CD8-positive, alpha-beta T cell (primary cell): ENCODE measurements at regions of chr17 and their contacts with region 1.

Region 1: GRCh38 chr17:55264645-55265298 is at the start of gene HLF:
- DNase-seq: peak; percentile 44 to 89 (median 68)
- ATAC-seq: peak; percentile 93
- H3K4me3 ChIP-seq: peak within 1 kb of the TSS; percentile 26 to 35
- H3K4me3 Mint-ChIP-seq: peak within 1 kb of the TSS; percentile 78
- H3K27ac ChIP-seq: no peak within 1 kb of the TSS
- H3K27ac Mint-ChIP-seq: no peak within 1 kb of the TSS
- H3K4me1 ChIP-seq: peaks cover 21% of the 10 kb centered on the region
- H3K4me1 Mint-ChIP-seq: peaks cover 24% of the 10 kb centered on the region
- H3K27me3 ChIP-seq: peaks cover 12 to 16% of the 10 kb centered on the region in 2 experiments
- H3K27me3 Mint-ChIP-seq: peaks cover 57% of the 10 kb centered on the region
- CTCF ChIP-seq: no peak
- total RNA-seq, gene HLF: 0.42 to 0.62 TPM

Region 2: DNA sequence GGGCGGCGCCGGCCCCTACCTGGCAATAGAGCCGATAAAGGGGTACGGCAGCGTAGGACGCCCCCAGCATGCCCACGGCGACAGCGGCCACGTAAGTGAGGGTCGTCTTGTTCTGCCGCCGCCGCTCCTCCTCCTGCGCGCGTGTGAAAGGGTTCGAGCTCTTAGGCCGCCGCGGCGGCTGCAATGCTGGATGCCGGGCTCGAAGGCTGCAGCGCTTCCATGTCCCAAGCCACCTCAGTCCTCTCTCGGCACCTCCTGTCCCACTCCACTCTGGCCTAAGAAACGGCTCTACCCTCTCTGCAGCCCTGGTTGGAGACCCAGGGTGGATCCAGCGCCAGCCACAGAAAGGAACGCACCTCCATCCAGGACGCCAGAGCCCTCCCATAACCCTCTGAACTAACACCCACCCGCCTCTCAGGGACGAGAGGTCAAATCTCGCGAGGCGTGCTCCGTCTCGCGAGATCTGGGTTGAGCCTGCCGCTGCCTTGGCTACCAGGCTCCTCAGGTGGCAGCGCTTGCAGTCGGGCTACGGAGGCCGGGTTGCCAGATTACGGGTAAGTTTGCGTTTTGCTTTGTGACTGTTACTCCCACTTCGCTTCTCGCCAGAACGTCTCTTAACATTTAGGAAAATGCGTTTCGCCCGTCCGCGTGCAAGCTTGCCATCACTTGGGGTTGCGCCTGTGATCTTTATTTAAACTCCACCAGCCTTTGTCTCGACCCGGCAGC is 296.3 kb before region 1 on chr17 and contains the starts of genes COX11 and STXBP4:
- CTCF ChIA-PET with region 1: no interaction called
- POLR2A ChIA-PET with region 1: no interaction called
- intact Hi-C with region 1: loop called (anchors 1 to 10 kb)
- DNase-seq: peak; percentile 85 to 98 (median 93)
- ATAC-seq: peak; percentile 96
- H3K4me3 ChIP-seq: peak within 1 kb of the TSS; percentile 65 to 88
- H3K4me3 Mint-ChIP-seq: no peak within 1 kb of the TSS
- H3K27ac ChIP-seq: peak within 1 kb of the TSS; percentile 70 to 78
- H3K27ac Mint-ChIP-seq: no peak within 1 kb of the TSS
- H3K4me1 ChIP-seq: peaks cover 21% of the 10 kb centered on the region
- H3K4me1 Mint-ChIP-seq: peaks cover 33% of the 10 kb centered on the region
- H3K27me3 ChIP-seq: no peaks in the 10 kb centered on the region
- H3K27me3 Mint-ChIP-seq: no peaks in the 10 kb centered on the region
- CTCF ChIP-seq: no peak
- total RNA-seq, gene COX11: 26.2 to 27.4 TPM
- total RNA-seq, gene STXBP4: 3.0 to 4.0 TPM

Region 3: DNA sequence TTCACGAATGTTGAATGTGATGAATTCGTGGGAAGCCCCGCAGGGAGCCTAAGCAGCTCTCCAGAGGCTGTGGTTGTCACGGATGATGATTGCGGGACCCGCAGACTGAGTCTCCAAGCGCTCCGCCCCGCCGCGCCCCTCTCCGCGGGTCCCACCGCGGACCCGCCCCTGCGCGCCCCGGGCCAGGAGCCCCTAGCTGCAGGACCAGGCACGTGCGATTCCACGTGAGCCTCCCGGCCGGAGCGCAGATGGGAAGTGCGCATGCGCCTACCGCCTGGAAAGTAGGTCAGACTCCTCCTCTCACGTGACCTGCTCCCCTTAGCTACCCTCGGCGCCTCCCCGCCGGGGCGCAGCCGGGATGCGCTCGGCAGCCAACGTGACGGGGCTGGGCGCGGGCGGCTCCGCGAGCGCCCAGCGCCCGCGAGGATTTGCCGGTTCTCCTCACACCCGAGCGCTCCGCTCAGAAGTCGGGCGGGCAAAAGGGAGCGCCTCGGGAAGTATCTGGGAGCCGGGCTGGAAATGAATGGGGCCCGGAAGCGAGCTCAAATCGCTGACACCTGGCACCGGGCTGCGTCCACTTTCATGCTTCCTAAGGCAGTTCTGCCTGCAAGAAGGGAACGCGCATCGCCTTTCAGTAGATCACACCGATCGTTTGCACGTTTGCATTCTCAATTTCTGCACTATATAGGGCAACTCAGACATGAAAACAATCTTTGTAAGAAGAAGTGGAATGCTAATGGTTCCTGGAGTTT is 26.4 kb before region 1 on chr17:
- CTCF ChIA-PET with region 1: no interaction called
- POLR2A ChIA-PET with region 1: interaction called, 18 read pairs
- intact Hi-C with region 1: loop called (anchors 1 kb)
- DNase-seq: peak; percentile 58 to 93 (median 82)
- ATAC-seq: peak; percentile 86
- H3K4me3 ChIP-seq: peak overlapping the region; percentile 57 to 71
- H3K4me3 Mint-ChIP-seq: peak overlapping the region; percentile 84
- H3K27ac ChIP-seq: peak overlapping the region; percentile 55 to 60
- H3K27ac Mint-ChIP-seq: peak overlapping the region; percentile 60
- H3K4me1 ChIP-seq: peaks cover 20% of the 10 kb centered on the region
- H3K4me1 Mint-ChIP-seq: peaks cover 18% of the 10 kb centered on the region
- H3K27me3 ChIP-seq: peaks cover 0 to 4% of the 10 kb centered on the region in 2 experiments
- H3K27me3 Mint-ChIP-seq: peaks cover 23% of the 10 kb centered on the region
- CTCF ChIP-seq: no peak